ENCODE measurements at regions of chr7 and their contacts with region 1.

Region 1: DNA sequence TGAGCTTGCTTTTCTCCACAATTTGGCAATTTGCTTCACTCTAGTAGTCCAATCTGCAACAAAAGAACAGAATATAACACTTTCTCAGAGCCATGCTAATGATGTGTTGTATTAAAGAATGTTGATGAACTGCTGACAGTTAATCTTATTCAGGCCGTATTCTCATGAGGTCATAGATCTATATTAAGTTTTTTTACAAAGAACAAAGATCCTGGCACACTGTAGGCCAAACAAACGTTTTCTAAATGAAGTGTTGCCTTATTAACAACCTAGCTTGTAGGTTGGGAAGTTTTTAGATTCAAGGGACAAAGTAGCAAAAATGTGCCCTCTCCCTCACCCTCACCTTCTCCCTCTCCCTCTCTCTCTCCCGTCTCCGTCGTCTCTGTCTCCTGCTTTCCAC is 6.8 kb downstream of the HILPDA start:
- ATAC-seq: no peak
- H3K4me3 ChIP-seq: no peak overlapping the region
- H3K27ac ChIP-seq: no peak overlapping the region
- H3K4me1 ChIP-seq: peaks cover 9 to 13% of the 10 kb centered on the region in 2 donors

Region 2: GRCh38 chr7:127609297-127609696 is 853.2 kb before region 1 on chr7:
- in situ Hi-C with region 1: no loop called
- ATAC-seq: no peak
- H3K4me3 ChIP-seq: no peak overlapping the region
- H3K27ac ChIP-seq: no peak overlapping the region
- H3K4me1 ChIP-seq: no peaks in the 10 kb centered on the region

Region 3: DNA sequence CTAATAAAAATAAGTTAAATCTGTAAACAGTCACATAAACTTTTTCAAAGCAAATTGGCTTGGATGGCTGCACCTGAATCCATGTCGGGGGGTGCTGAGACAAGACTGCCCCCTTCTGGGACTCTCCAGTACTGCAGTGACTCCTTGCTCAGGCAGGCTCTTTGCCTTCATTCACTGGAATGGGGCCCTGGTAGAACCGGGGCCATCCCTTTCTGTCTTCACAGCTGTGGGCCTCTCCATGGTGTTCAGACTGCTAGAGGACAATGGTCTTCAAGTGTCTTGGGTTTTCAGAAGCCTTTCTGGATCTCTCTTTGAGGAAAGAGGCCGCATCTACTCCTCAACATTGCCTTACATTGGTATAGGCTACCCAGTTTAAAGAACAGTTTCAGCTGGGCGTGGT is 36.6 kb before region 1 on chr7:
- in situ Hi-C with region 1: loop called in 1 of 9 experiments (anchors 5 kb)
- ATAC-seq: peak; percentile 42 to 80 (median 54)
- H3K4me3 ChIP-seq: no peak overlapping the region
- H3K27ac ChIP-seq: no peak overlapping the region
- H3K4me1 ChIP-seq: no peaks in the 10 kb centered on the region

Region 4: DNA sequence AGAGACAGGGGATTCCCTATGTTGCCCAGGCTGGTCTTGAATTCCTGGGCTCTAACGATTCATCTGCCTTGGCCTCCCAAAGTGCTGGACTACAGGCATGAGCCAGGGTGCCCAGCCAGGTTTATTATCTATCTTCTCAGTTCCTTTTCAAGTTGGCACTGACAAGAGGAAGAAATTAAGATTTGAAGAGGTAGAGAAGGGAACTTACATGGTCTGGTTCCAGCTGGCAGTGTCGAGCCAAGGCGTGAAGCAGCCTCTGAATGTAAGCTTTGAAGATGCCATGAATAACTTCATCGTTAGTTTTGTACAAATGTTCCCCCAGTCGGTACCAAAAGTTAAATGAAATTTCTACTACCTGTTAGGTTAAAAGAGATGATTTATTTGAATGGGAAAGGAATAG is 534.7 kb after region 1 on chr7:
- in situ Hi-C with region 1: no loop called
- ATAC-seq: no peak
- H3K4me3 ChIP-seq: no peak overlapping the region
- H3K27ac ChIP-seq: no peak overlapping the region
- H3K4me1 ChIP-seq: no peaks in the 10 kb centered on the region